ENCODE measurements at regions of chr7 and their contacts with region 1.

Region 1: DNA sequence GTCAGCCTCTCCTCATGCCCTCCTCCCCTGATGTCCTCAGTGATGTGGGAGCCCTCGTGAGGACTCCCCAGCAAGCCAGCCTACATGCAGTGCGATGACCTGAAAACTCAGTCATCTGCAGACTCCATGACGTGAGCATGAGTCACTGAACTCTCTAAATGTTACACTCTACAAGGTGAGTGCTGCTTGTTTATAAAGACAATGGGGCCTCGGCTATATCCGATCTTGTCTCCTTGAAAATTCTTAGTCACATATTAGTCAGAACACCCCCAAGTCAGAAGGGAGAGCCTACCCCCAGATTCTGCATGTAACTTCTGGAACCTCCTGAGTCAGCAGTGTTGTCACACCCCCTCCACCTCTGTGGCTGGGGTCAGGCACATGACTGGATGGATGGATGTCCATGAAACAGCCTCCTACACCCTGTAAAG is 673.8 kb downstream of the INHBA start:
- DNase-seq: no peak
- CTCF ChIP-seq: no peak

Region 2: DNA sequence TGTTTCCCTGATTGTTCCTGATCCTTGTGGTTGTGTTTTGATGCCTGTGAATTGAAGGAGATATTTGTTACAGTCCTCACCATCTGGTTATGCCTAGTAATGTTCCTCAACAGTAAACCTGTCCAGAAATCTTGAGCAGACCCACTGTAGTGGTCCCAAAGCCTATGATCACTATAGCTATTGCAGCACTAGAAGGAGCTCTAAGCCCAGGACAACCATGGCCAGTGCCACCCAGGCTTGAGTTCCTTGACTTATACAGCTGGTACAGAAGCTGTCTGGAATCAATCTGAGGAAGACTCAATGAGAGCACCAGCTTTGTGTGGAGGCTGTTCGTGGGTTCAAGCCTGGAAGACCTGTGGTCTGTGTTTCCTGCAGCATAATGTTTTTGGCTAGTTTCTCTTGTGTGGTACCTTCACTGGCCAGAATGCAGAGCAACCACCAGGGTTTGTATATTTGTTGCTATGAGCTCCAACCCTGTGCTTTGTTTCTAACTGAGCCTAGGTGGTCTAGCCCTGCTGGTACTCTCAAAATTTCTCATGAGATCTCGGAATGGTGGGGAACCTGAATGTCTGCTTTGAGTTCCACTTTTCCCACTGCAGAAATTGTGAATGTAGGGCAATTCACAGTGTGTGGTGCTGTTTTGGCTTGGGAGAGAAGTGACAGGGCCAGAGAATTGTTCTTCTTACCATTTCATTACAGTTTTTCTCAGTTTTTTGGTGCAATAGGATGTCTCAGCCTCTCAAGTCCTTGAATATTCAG is 539.1 kb before region 1 on chr7:
- CTCF ChIA-PET with region 1: no interaction called
- POLR2A ChIA-PET with region 1: no interaction called
- DNase-seq: no peak
- CTCF ChIP-seq: no peak

Region 3: GRCh38 chr7:41046221-41046761 is 17.2 kb after region 1 on chr7:
- CTCF ChIA-PET with region 1: interaction called, 19 read pairs
- POLR2A ChIA-PET with region 1: no interaction called
- DNase-seq: no peak
- CTCF ChIP-seq: no peak

Region 4: DNA sequence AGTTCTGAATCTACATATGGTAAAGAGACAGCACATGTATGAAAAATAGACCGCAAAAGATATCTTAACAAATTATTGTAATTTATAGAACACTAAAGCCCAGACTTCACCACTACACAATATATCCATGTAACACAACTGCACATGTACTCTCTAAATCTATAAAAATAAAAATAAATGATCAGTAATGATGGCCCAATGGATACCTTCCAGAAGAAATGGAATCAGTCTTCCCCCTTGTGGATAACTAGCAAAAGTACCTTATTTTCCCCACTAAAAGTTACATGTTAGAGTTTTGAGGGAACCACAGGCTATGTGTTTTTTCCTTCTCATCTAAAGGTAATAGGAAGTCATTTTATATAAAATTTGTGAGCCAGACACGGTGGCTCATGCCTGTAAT is 1857.0 kb after region 1 on chr7:
- CTCF ChIA-PET with region 1: no interaction called
- POLR2A ChIA-PET with region 1: interaction called, 10 read pairs
- DNase-seq: no peak
- CTCF ChIP-seq: peak; percentile 21

Measured in GM10248 (cell line).